Naive thymus-derived CD4-positive, alpha-beta T cell (primary cell): ENCODE measurements at regions of chr19 and their contacts with region 1.

Region 1: DNA sequence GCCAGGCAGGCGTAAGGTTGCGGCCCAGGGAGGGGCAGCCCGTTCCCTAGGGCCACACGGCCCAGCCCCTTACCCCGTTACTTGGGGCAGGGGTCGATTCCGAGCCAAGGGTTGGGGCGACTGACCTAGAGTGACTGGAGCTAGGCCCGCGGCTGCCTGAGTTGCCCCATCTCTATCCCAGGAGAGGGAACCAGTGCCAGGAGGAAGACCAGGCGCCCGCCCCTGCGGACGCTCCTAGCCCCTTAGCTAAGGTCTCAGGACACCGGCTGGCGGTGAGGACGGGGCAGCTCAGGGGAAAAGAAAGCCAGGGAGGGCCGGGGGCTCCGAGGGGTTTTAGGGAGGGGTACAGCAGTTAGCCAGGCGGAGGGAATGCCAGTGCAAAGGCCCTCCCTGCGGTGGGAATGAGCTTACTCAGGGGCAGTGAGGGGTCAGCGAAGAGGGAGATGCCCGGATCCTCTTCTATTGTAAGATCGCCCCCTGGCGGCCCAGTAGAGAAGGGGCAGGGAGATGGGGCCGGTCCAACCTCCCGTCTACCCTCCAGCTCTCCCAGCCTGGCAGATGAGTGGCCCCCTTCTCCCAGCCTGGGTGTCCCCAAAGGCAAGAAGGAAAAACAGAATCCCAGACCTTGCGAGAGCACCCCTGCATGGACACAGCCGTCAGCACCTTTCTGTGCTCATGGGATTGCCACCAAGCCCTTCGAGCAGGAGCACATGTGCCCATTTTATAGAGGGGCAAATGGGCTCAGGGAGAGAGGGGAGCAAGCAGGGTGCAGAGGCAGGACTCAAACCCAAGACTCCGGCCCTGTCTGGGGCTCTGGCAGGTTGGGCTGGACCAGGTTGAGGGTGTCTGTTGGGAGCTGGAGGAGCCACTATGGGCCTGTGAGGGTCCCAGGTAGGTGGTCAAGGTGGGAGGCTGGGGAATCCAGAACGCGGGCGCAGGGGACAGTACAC is 16.3 kb downstream of the CILP2 start:
- DNase-seq: peak in 4 of 9 donors; percentile 37 to 73 (median 52)
- ATAC-seq: peak; percentile 67
- H3K4me3 ChIP-seq: no peak overlapping the region
- H3K4me3 Mint-ChIP-seq: no peak overlapping the region
- H3K27ac ChIP-seq: no peak overlapping the region
- H3K27ac Mint-ChIP-seq: peak overlapping the region in 2 of 9 donors; percentile 46 to 77
- H3K4me1 ChIP-seq: peaks cover 0 to 6% of the 10 kb centered on the region in 2 donors
- H3K4me1 Mint-ChIP-seq: peaks cover 7 to 16% (median 13%) of the 10 kb centered on the region in 7 donors
- H3K27me3 ChIP-seq: no peaks in the 10 kb centered on the region
- H3K27me3 Mint-ChIP-seq: no peaks in the 10 kb centered on the region

Region 2: GRCh38 chr19:19361075-19361594 is 193.2 kb before region 1 on chr19:
- CTCF ChIA-PET with region 1: no interaction called
- POLR2A ChIA-PET with region 1: no interaction called
- intact Hi-C with region 1: no loop called
- DNase-seq: peak; percentile 40 to 70 (median 57)
- ATAC-seq: peak; percentile 79
- H3K4me3 ChIP-seq: no peak overlapping the region
- H3K4me3 Mint-ChIP-seq: peak overlapping the region in 8 of 10 donors; percentile 7 to 73 (median 54)
- H3K27ac ChIP-seq: no peak overlapping the region
- H3K27ac Mint-ChIP-seq: peak overlapping the region in 8 of 9 donors; percentile 5 to 78 (median 68)
- H3K4me1 ChIP-seq: peaks cover 15 to 21% of the 10 kb centered on the region in 2 donors
- H3K4me1 Mint-ChIP-seq: peaks cover 18 to 51% (median 35%) of the 10 kb centered on the region in 7 donors
- H3K27me3 ChIP-seq: no peaks in the 10 kb centered on the region
- H3K27me3 Mint-ChIP-seq: no peaks in the 10 kb centered on the region

Region 3: GRCh38 chr19:19531951-19532805 is 22.2 kb before region 1 on chr19:
- CTCF ChIA-PET with region 1: interaction called, 24 read pairs
- POLR2A ChIA-PET with region 1: interaction called, 11 read pairs
- intact Hi-C with region 1: loop called in 1 of 2 experiments (anchors 2 kb)
- DNase-seq: peak; percentile 69 to 93 (median 84)
- ATAC-seq: peak; percentile 90
- H3K4me3 ChIP-seq: no peak overlapping the region
- H3K4me3 Mint-ChIP-seq: no peak overlapping the region
- H3K27ac ChIP-seq: no peak overlapping the region
- H3K27ac Mint-ChIP-seq: peak overlapping the region in 8 of 9 donors; percentile 33 to 84 (median 76)
- H3K4me1 ChIP-seq: peaks cover 3 to 9% of the 10 kb centered on the region in 2 donors
- H3K4me1 Mint-ChIP-seq: peaks cover 7 to 22% (median 17%) of the 10 kb centered on the region in 7 donors
- H3K27me3 ChIP-seq: no peaks in the 10 kb centered on the region
- H3K27me3 Mint-ChIP-seq: peaks cover 0 to 6% (median 0%) of the 10 kb centered on the region in 5 donors

Region 4: GRCh38 chr19:19597809-19598306 is 43.5 kb after region 1 on chr19:
- CTCF ChIA-PET with region 1: interaction called, 5 read pairs
- POLR2A ChIA-PET with region 1: interaction called, 14 read pairs
- intact Hi-C with region 1: loop called in 1 of 2 experiments (anchors 5 kb)
- DNase-seq: peak in 8 of 9 donors; percentile 54 to 90 (median 84)
- ATAC-seq: peak; percentile 87
- H3K4me3 ChIP-seq: peak overlapping the region; percentile 52
- H3K4me3 Mint-ChIP-seq: peak overlapping the region; percentile 61 to 85 (median 74)
- H3K27ac ChIP-seq: peak overlapping the region; percentile 96
- H3K27ac Mint-ChIP-seq: peak overlapping the region; percentile 90 to 99 (median 97)
- H3K4me1 ChIP-seq: peaks cover 53 to 54% of the 10 kb centered on the region in 2 donors
- H3K4me1 Mint-ChIP-seq: peaks cover 29 to 75% (median 66%) of the 10 kb centered on the region in 7 donors
- H3K27me3 ChIP-seq: no peaks in the 10 kb centered on the region
- H3K27me3 Mint-ChIP-seq: no peaks in the 10 kb centered on the region